ENCODE measurements at regions of chr11 and their contacts with region 1.

Region 1: DNA sequence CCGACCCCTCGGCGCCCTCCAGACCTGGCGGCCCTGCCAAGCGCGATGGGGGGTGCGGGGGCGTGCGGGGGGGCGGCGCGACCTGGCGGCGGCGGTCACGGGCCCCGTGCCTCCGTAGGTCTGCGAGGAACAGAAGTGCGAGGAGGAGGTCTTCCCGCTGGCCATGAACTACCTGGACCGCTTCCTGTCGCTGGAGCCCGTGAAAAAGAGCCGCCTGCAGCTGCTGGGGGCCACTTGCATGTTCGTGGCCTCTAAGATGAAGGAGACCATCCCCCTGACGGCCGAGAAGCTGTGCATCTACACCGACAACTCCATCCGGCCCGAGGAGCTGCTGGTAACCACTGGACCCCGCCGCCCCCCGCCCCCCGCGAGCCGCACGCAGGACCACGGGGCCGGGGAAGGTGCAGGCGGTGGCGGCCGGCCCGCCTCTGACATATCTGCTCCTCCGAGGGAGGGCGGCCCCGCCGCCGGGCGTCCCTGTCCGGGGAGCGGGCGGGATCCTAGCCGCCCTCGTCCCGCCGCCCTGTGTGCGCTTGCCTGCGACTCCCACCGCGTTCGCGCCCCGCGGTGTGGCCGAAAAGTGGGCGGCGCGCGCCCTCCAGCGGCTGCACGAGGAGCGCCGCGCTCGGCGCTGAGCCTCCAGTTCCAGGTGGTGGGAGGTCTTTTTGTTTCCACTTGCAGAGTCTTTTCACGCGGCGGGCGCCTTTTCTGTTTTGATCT is 2.1 kb downstream of the CCND1 start:
- DNase-seq: peak; percentile 86
- H3K4me3 ChIP-seq: peak overlapping the region; percentile 40 to 79 (median 70)
- H3K27ac ChIP-seq: peak overlapping the region; percentile 79 to 92 (median 86)
- H3K4me1 ChIP-seq: peaks cover 0 to 73% (median 70%) of the 10 kb centered on the region in 4 donors
- H3K27me3 ChIP-seq: peaks cover 34 to 57% (median 55%) of the 10 kb centered on the region in 3 donors
- CTCF ChIP-seq: peak; percentile 61 to 93 (median 72)
- EP300 ChIP-seq: no peak
- POLR2A ChIP-seq: no peak

Region 2: GRCh38 chr11:68903288-68904247 is 739.5 kb before region 1 on chr11 and contains the starts of genes IGHMBP2 and MRPL21:
- intact Hi-C with region 1: loop called (anchors 10 kb)
- DNase-seq: peak; percentile 92
- H3K4me3 ChIP-seq: peak within 1 kb of the TSS; percentile 63 to 94 (median 80)
- H3K27ac ChIP-seq: peak within 1 kb of the TSS; percentile 85 to 94 (median 91)
- H3K4me1 ChIP-seq: peaks cover 2 to 38% (median 31%) of the 10 kb centered on the region in 4 donors
- H3K27me3 ChIP-seq: no peaks in the 10 kb centered on the region
- CTCF ChIP-seq: no peak
- EP300 ChIP-seq: no peak
- POLR2A ChIP-seq: peak; percentile 57 to 71
- total RNA-seq, gene IGHMBP2: 12.2 to 41.3 (median 30.4) TPM
- total RNA-seq, gene MRPL21: 53.7 to 99.1 (median 67.5) TPM

Region 3: GRCh38 chr11:69101115-69101791 is 541.8 kb before region 1 on chr11:
- intact Hi-C with region 1: loop called (anchors 1 kb)
- DNase-seq: peak; percentile 83
- H3K4me3 ChIP-seq: no peak overlapping the region
- H3K27ac ChIP-seq: no peak overlapping the region
- H3K4me1 ChIP-seq: peaks cover 0 to 10% (median 8%) of the 10 kb centered on the region in 4 donors
- H3K27me3 ChIP-seq: no peaks in the 10 kb centered on the region
- CTCF ChIP-seq: peak; percentile 92 to 98 (median 94)
- EP300 ChIP-seq: no peak
- POLR2A ChIP-seq: no peak

Region 4: GRCh38 chr11:69296890-69297786 is 345.9 kb before region 1 on chr11:
- intact Hi-C with region 1: loop called (anchors 5 kb)
- DNase-seq: peak; percentile 93
- H3K4me3 ChIP-seq: peak overlapping the region in 2 of 4 donors; percentile 19 to 29
- H3K27ac ChIP-seq: peak overlapping the region; percentile 70 to 77 (median 72)
- H3K4me1 ChIP-seq: peaks cover 0 to 38% (median 34%) of the 10 kb centered on the region in 4 donors
- H3K27me3 ChIP-seq: no peaks in the 10 kb centered on the region
- CTCF ChIP-seq: no peak
- EP300 ChIP-seq: no peak
- POLR2A ChIP-seq: no peak

Region 5: GRCh38 chr11:69540118-69540502 is 103.0 kb before region 1 on chr11:
- intact Hi-C with region 1: no loop called
- DNase-seq: peak; percentile 62
- H3K4me3 ChIP-seq: no peak overlapping the region
- H3K27ac ChIP-seq: peak overlapping the region; percentile 23 to 45 (median 39)
- H3K4me1 ChIP-seq: no peaks in the 10 kb centered on the region
- H3K27me3 ChIP-seq: no peaks in the 10 kb centered on the region
- CTCF ChIP-seq: no peak
- EP300 ChIP-seq: no peak
- POLR2A ChIP-seq: no peak

Region 6: GRCh38 chr11:69670158-69670845 is 27.2 kb after region 1 on chr11:
- intact Hi-C with region 1: loop called (anchors 2 kb)
- DNase-seq: peak; percentile 92
- H3K4me3 ChIP-seq: no peak overlapping the region
- H3K27ac ChIP-seq: peak overlapping the region; percentile 54 to 71 (median 62)
- H3K4me1 ChIP-seq: peaks cover 0 to 32% (median 29%) of the 10 kb centered on the region in 4 donors
- H3K27me3 ChIP-seq: no peaks in the 10 kb centered on the region
- CTCF ChIP-seq: peak; percentile 75 to 94 (median 88)
- EP300 ChIP-seq: no peak
- POLR2A ChIP-seq: no peak

Measured in sigmoid colon (tissue), 7 donors.